ENCODE measurements at regions of chr6 and their contacts with region 1.

Region 1: DNA sequence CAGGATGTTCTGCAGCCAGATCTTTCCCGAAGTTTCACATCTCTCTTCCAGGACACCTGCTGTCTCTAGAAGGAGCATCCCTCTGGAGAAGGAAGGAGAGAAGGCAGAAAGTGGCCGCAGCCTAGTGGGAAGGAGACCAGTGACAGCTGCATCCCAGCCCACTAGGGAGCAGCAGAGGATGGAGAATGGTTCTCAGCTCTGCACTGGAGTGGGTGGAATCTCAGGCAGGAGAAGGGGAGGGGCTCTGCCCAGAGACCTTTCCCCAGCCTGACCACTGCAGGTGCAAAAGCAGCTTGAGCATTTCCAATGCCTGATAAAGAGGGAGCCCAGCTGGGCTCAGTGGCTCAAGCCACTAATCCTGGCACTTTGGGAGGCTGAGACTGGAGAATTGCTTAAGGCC is 32.3 kb downstream of the NCR2 start:
- DNase-seq: peak; percentile 83
- H3K4me3 Mint-ChIP-seq: no peak overlapping the region
- H3K27ac Mint-ChIP-seq: no peak overlapping the region
- H3K4me1 Mint-ChIP-seq: peaks cover 30% of the 10 kb centered on the region
- H3K27me3 Mint-ChIP-seq: peaks cover 70% of the 10 kb centered on the region
- CTCF ChIP-seq: peak; percentile 60

Region 2: GRCh38 chr6:41150669-41151068 is 217.0 kb before region 1 on chr6:
- CTCF ChIA-PET with region 1: no interaction called
- intact Hi-C with region 1: no loop called
- DNase-seq: no peak
- H3K4me3 Mint-ChIP-seq: no peak overlapping the region
- H3K27ac Mint-ChIP-seq: no peak overlapping the region
- H3K4me1 Mint-ChIP-seq: no peaks in the 10 kb centered on the region
- H3K27me3 Mint-ChIP-seq: peaks cover 30% of the 10 kb centered on the region
- CTCF ChIP-seq: no peak

Region 3: GRCh38 chr6:41455818-41456217 is 88.1 kb after region 1 on chr6:
- CTCF ChIA-PET with region 1: interaction called, 5 read pairs
- intact Hi-C with region 1: loop called (anchors 2 kb)
- DNase-seq: no peak
- H3K4me3 Mint-ChIP-seq: no peak overlapping the region
- H3K27ac Mint-ChIP-seq: no peak overlapping the region
- H3K4me1 Mint-ChIP-seq: peaks cover 10% of the 10 kb centered on the region
- H3K27me3 Mint-ChIP-seq: peaks cover 8% of the 10 kb centered on the region
- CTCF ChIP-seq: no peak

Region 4: GRCh38 chr6:41591859-41592502 is 224.3 kb after region 1 on chr6:
- CTCF ChIA-PET with region 1: interaction called, 9 read pairs
- intact Hi-C with region 1: loop called (anchors 1 kb)
- DNase-seq: peak; percentile 85
- H3K4me3 Mint-ChIP-seq: no peak overlapping the region
- H3K27ac Mint-ChIP-seq: no peak overlapping the region
- H3K4me1 Mint-ChIP-seq: no peaks in the 10 kb centered on the region
- H3K27me3 Mint-ChIP-seq: no peaks in the 10 kb centered on the region
- CTCF ChIP-seq: peak; percentile 96

Region 5: DNA sequence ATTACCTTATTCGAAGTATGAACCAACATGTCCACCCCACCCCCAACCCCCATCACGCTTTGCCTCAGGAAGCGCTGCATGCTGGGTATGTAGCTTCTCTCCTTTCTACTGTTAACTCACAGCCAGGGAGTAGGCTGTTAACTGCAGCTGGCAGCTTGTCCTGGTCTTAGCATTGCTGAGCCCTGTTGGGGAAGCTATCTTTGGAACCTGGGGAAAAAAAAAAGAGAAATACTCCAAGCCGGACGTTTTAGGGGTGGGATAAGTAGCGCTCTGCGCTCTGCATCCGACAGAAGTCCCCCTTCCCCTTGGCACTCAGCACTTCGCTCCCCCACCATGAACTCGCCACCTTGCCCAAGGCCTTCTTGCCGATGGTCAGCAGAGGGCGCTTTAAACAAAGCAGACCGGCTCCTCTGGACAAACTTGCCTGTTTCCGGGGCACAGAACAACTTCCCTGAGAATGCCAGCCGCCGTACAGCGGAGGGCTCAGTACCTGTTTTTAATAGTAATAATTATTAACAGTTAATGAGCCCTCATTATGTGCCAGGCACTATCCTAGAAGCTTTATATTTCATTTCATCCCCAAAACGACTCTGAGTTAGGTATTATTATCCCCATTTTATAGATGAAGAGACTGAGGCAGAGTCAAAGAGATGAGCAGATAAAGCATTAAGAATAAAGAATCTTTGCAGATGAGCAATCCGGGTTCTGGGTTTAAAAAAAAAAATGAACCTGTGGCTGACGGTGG is 235.3 kb after region 1 on chr6:
- CTCF ChIA-PET with region 1: interaction called, 9 read pairs
- intact Hi-C with region 1: loop called (anchors 1 kb)
- DNase-seq: peak; percentile 90
- H3K4me3 Mint-ChIP-seq: no peak overlapping the region
- H3K27ac Mint-ChIP-seq: no peak overlapping the region
- H3K4me1 Mint-ChIP-seq: peaks cover 8% of the 10 kb centered on the region
- H3K27me3 Mint-ChIP-seq: peaks cover 21% of the 10 kb centered on the region
- CTCF ChIP-seq: peak; percentile 88

Region 6: DNA sequence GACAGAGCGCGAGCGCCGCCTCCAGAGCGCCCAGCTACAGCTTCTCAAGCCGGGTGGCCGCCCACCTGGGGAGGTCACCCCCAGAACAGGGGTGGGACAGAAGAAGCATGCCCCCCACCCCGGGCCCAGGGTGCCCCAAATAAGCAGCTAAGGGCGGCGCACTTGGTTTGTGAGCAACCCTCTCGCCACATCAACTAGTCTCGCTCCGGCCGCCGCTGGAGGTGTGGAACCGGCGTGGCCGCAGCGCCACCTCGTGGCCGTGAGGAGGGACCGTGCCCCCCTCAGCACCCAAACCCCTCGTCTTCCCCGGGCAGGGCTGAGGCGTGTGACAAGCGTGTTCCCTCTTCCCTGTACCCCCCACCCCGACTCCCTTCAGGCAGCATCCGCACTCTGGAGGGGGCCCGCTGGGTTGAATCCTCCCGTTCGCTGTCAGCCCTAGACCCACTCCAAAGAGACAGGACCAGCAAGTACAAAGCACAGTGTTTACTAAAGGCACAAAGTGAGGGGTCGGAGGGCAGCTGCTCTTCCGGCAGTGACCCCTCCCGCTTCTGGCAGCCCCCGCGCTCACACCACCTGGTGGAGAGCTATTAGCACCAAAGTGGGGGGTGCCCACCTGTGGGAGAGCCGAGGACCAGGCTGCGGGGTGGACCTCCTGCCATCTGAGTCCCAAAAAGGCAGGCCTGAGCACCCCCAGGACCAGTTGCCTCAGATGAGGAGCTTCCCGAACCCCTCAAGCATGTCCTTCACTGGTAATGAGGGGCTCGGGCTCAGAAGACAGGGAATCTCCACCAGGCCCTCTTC is 316.0 kb after region 1 on chr6:
- CTCF ChIA-PET with region 1: interaction called, 14 read pairs
- intact Hi-C with region 1: loop called (anchors 1 kb)
- DNase-seq: peak; percentile 88
- H3K4me3 Mint-ChIP-seq: peak overlapping the region; percentile 68
- H3K27ac Mint-ChIP-seq: no peak overlapping the region
- H3K4me1 Mint-ChIP-seq: no peaks in the 10 kb centered on the region
- H3K27me3 Mint-ChIP-seq: no peaks in the 10 kb centered on the region
- CTCF ChIP-seq: peak; percentile 94

Region 7: GRCh38 chr6:41779793-41780545 is 412.3 kb after region 1 on chr6 and contains the start of gene FRS3:
- CTCF ChIA-PET with region 1: no interaction called
- intact Hi-C with region 1: loop called (anchors 5 kb)
- DNase-seq: peak; percentile 99
- H3K4me3 Mint-ChIP-seq: peak within 1 kb of the TSS; percentile 77
- H3K27ac Mint-ChIP-seq: peak within 1 kb of the TSS; percentile 60
- H3K4me1 Mint-ChIP-seq: peaks cover 35% of the 10 kb centered on the region
- H3K27me3 Mint-ChIP-seq: no peaks in the 10 kb centered on the region
- CTCF ChIP-seq: peak; percentile 90
- total RNA-seq, gene FRS3: 5.0 and 6.6 TPM in 2 replicates